Caco-2 (cell line): ENCODE measurements at regions of chr9 and their contacts with region 1.

Region 1: GRCh38 chr9:6771722-6772121 is 13.9 kb downstream of the KDM4C start:
- DNase-seq: no peak
- H3K4me3 ChIP-seq: no peak overlapping the region
- H3K4me3 Mint-ChIP-seq: no peak overlapping the region
- H3K27ac Mint-ChIP-seq: no peak overlapping the region
- H3K4me1 ChIP-seq: peaks cover 9% of the 10 kb centered on the region
- H3K4me1 Mint-ChIP-seq: no peaks in the 10 kb centered on the region
- H3K27me3 ChIP-seq: no peaks in the 10 kb centered on the region
- H3K27me3 Mint-ChIP-seq: no peaks in the 10 kb centered on the region
- CTCF ChIP-seq: no peak

Region 2: GRCh38 chr9:6552033-6552432 is 219.7 kb before region 1 on chr9:
- CTCF ChIA-PET with region 1: no interaction called
- POLR2A ChIA-PET with region 1: interaction called, 10 read pairs
- intact Hi-C with region 1: no loop called
- DNase-seq: no peak
- H3K4me3 ChIP-seq: no peak overlapping the region
- H3K4me3 Mint-ChIP-seq: no peak overlapping the region
- H3K27ac Mint-ChIP-seq: peak overlapping the region; percentile 70
- H3K4me1 ChIP-seq: no peaks in the 10 kb centered on the region
- H3K4me1 Mint-ChIP-seq: peaks cover 7% of the 10 kb centered on the region
- H3K27me3 ChIP-seq: no peaks in the 10 kb centered on the region
- H3K27me3 Mint-ChIP-seq: no peaks in the 10 kb centered on the region
- CTCF ChIP-seq: no peak

Region 3: DNA sequence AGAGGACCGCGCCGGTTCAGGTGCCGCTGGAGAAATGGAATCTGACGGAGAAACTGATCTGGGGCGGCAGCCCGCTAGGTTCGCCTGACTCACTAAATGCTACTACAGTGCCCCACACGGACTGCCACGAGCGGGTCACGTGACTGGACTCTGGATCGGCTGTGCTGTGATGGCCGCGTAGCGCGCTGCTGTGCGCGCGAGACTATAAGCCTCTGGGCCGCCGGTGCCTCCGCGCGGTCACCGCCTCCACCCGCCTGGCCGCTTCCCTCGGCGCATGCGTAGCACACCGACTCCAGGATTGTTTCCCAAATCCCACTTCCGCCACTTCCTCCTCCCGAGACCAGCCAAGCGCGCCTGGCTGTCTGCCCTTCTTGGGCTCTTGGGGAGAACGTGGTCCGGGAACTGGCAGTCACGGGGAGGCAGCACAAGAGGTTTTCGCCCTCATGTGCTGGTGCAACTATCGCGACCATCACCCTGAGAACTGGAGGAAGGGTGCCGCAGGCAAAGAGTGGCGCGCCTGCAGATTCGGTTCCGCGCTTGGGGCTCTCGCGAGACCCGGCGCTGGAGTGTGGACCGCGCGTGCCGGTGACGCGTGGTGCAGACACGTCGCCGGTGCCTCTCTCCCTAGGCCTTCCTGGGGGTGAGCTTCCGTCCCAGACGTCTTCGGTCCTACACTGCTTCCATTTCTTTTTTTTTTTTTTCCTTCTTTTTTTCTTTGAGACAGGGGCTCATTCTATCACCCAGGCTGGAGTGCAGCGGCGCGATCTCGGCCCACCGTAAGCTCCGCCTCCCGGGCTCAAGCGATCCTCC is 90.4 kb before region 1 on chr9:
- CTCF ChIA-PET with region 1: no interaction called
- POLR2A ChIA-PET with region 1: no interaction called
- intact Hi-C with region 1: no loop called
- DNase-seq: peak; percentile 96 to 97
- H3K4me3 ChIP-seq: peak overlapping the region; percentile 62
- H3K4me3 Mint-ChIP-seq: peak overlapping the region; percentile 77
- H3K27ac Mint-ChIP-seq: peak overlapping the region; percentile 99
- H3K4me1 ChIP-seq: peaks cover 15% of the 10 kb centered on the region
- H3K4me1 Mint-ChIP-seq: peaks cover 10% of the 10 kb centered on the region
- H3K27me3 ChIP-seq: no peaks in the 10 kb centered on the region
- H3K27me3 Mint-ChIP-seq: no peaks in the 10 kb centered on the region
- CTCF ChIP-seq: no peak

Region 4: GRCh38 chr9:6788162-6789016 is 16.7 kb after region 1 on chr9:
- CTCF ChIA-PET with region 1: no interaction called
- POLR2A ChIA-PET with region 1: interaction called, 12 read pairs
- intact Hi-C with region 1: no loop called
- DNase-seq: peak; percentile 59 to 63
- H3K4me3 ChIP-seq: no peak overlapping the region
- H3K4me3 Mint-ChIP-seq: peak overlapping the region; percentile 85
- H3K27ac Mint-ChIP-seq: peak overlapping the region; percentile 92
- H3K4me1 ChIP-seq: peaks cover 47% of the 10 kb centered on the region
- H3K4me1 Mint-ChIP-seq: peaks cover 34% of the 10 kb centered on the region
- H3K27me3 ChIP-seq: no peaks in the 10 kb centered on the region
- H3K27me3 Mint-ChIP-seq: no peaks in the 10 kb centered on the region
- CTCF ChIP-seq: no peak